CD4-positive, alpha-beta T cell (primary cell): ENCODE measurements at regions of chr20 and their contacts with region 1.

Region 1: GRCh38 chr20:407133-407952 is 756 bp upstream of the RBCK1 start:
- DNase-seq: peak; percentile 13 to 88 (median 62)
- ATAC-seq: peak; percentile 73
- H3K4me3 ChIP-seq: peak overlapping the region; percentile 97
- H3K4me3 Mint-ChIP-seq: peak overlapping the region; percentile 95
- H3K27ac ChIP-seq: peak overlapping the region; percentile 40 to 45
- H3K27ac Mint-ChIP-seq: peak overlapping the region; percentile 88
- H3K4me1 ChIP-seq: peaks cover 36% of the 10 kb centered on the region
- H3K4me1 Mint-ChIP-seq: peaks cover 51% of the 10 kb centered on the region
- H3K27me3 ChIP-seq: no peaks in the 10 kb centered on the region
- H3K27me3 Mint-ChIP-seq: no peaks in the 10 kb centered on the region
- CTCF ChIP-seq: peak; percentile 37

Region 2: DNA sequence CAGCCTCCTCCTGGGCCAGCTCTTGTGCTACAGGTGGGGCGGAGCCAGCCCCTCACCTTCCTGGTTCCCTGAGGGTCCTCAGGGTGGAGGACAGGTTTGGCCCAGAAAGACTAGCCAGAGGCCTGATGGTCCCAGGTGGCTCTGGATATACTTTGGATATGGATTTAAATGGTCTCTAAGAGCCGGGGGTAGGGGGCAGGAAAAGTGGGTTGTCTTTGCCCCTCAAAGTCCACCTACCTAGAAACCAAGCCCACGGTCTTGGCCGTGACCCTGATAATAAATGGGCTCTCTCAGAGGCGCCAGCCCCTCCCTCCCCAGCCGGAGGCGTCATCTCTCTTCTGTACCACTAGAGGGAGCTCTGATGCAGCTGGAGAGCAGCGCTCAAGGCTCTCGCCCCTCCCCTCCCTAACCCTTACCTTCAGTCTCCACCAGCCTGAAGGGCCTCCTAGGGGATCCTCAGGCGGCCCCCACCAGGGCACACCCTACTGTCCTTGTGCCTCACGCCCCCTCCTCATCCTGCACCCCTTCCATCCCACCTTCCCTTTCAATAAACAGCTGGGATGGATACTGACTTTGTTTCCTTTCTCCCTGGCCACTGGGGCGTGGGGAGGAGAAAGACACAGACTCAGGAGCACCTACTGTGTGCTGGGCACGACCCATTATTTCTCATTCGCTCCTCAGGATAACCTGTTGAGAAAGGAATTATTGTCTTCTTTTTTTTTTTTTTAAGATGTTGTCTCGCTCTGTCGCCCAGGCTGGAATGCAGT is 52.9 kb before region 1 on chr20:
- CTCF ChIA-PET with region 1: no interaction called
- POLR2A ChIA-PET with region 1: no interaction called
- intact Hi-C with region 1: loop called in 1 of 2 experiments (anchors 2 kb)
- DNase-seq: peak; percentile 64 to 91 (median 74)
- ATAC-seq: peak; percentile 100
- H3K4me3 ChIP-seq: no peak overlapping the region
- H3K4me3 Mint-ChIP-seq: no peak overlapping the region
- H3K27ac ChIP-seq: no peak overlapping the region
- H3K27ac Mint-ChIP-seq: no peak overlapping the region
- H3K4me1 ChIP-seq: peaks cover 8% of the 10 kb centered on the region
- H3K4me1 Mint-ChIP-seq: no peaks in the 10 kb centered on the region
- H3K27me3 ChIP-seq: no peaks in the 10 kb centered on the region
- H3K27me3 Mint-ChIP-seq: no peaks in the 10 kb centered on the region
- CTCF ChIP-seq: peak; percentile 96

Region 3: GRCh38 chr20:438571-439469 is 31.5 kb after region 1 on chr20:
- CTCF ChIA-PET with region 1: no interaction called
- POLR2A ChIA-PET with region 1: interaction called, 20 read pairs
- intact Hi-C with region 1: no loop called
- DNase-seq: peak; percentile 28 to 86 (median 54)
- ATAC-seq: peak; percentile 85
- H3K4me3 ChIP-seq: peak overlapping the region; percentile 37
- H3K4me3 Mint-ChIP-seq: peak overlapping the region; percentile 71
- H3K27ac ChIP-seq: no peak overlapping the region
- H3K27ac Mint-ChIP-seq: peak overlapping the region; percentile 49
- H3K4me1 ChIP-seq: peaks cover 51% of the 10 kb centered on the region
- H3K4me1 Mint-ChIP-seq: peaks cover 56% of the 10 kb centered on the region
- H3K27me3 ChIP-seq: no peaks in the 10 kb centered on the region
- H3K27me3 Mint-ChIP-seq: no peaks in the 10 kb centered on the region
- CTCF ChIP-seq: no peak

Region 4: GRCh38 chr20:478949-479429 is 71.6 kb after region 1 on chr20:
- CTCF ChIA-PET with region 1: no interaction called
- POLR2A ChIA-PET with region 1: no interaction called
- intact Hi-C with region 1: loop called (anchors 1 kb)
- DNase-seq: peak in 6 of 14 experiments; percentile 4 to 81 (median 62)
- ATAC-seq: peak; percentile 88
- H3K4me3 ChIP-seq: no peak overlapping the region
- H3K4me3 Mint-ChIP-seq: no peak overlapping the region
- H3K27ac ChIP-seq: no peak overlapping the region
- H3K27ac Mint-ChIP-seq: no peak overlapping the region
- H3K4me1 ChIP-seq: peaks cover 11% of the 10 kb centered on the region
- H3K4me1 Mint-ChIP-seq: peaks cover 28% of the 10 kb centered on the region
- H3K27me3 ChIP-seq: no peaks in the 10 kb centered on the region
- H3K27me3 Mint-ChIP-seq: no peaks in the 10 kb centered on the region
- CTCF ChIP-seq: peak; percentile 77